GM23248 (cell line): ENCODE measurements at regions of chr7 and their contacts with region 1.

Region 1: GRCh38 chr7:100852048-100852872 is at the start of gene SLC12A9:
- DNase-seq: peak; percentile 97
- H3K4me3 ChIP-seq: peak within 1 kb of the TSS; percentile 91
- H3K27ac ChIP-seq: no peak within 1 kb of the TSS
- H3K4me1 ChIP-seq: no peaks in the 10 kb centered on the region
- H3K27me3 ChIP-seq: no peaks in the 10 kb centered on the region
- total RNA-seq, gene SLC12A9: 16.8 and 21.2 TPM in 2 replicates

Region 2: DNA sequence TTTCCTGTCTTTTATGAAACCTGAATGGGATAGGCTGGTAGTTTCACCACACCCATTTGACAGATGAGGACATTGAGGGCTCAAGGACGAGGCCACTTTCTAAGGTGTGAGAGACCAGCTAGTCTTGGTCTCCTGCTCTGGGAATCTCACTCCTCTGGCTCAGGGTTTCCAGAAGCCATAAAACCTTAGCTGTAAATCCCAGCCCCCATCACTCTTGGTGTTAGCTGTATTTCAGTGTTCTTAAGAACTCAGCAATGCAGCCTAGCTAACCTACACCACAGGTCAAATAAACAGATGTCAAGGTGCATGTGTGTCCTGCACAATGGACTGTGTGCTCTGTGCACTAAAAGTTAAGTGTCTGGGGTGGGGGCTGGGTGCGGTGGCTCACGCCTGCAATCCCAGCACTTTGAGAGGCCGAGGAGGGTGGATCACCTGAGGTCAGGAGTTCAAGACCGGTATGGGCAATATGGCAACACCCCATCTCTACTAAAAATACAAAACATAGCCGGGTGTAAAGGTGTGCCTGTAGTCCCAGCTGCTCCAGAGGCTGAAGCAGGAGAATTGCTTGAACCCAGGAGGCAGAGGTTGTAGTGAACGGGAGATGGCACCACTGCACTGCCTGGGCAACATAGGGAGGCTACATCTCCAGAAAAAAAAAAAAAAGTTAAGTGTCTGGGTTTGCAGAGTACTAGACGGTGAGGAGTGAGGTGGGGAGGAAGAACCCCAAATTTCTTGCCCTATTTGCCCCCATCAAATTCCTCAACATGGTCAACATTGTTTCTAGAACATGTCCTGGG is 132.5 kb before region 1 on chr7:
- in situ Hi-C with region 1: loop called (anchors 10 kb)
- DNase-seq: peak; percentile 68
- H3K4me3 ChIP-seq: no peak overlapping the region
- H3K27ac ChIP-seq: no peak overlapping the region
- H3K4me1 ChIP-seq: 0 out of 2 replicates have a peak, but pooled peaks cover 5% of the 10 kb centered on the region
- H3K27me3 ChIP-seq: peaks cover 27% of the 10 kb centered on the region